Lower leg skin (tissue), 4 donors: ENCODE measurements at regions of chr3 and their contacts with region 1.

Region 1: DNA sequence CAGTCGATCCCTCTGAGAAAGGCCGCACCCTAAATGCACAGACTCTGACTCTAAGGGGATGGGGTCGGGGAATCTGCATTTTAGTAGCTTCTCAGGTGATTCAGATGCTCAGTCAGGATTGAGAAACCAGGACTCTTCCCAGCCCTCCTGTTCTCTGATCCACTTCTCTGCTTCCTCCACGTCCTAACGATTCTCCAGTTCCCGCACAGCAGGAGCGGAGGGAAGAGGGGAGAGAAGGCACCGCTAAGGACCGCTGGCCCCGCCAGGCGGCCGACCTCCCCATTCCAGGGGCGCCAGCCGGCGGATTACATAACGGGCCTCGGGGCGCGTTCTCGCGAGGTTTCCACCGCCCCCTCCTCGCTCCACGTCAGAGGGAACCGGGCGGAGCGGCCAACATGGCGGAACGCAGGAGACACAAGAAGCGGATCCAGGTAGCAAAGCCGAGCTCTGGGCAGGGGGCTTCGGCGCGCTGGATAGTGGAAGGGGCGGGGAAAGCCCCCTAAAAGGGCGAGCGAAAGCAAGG is at the start of gene SEC62:
- DNase-seq: peak; percentile 87 to 98
- H3K4me3 ChIP-seq: peak within 1 kb of the TSS; percentile 77
- CTCF ChIP-seq: no peak
- POLR2A ChIP-seq: peak in 1 of 2 donors; percentile 50
- total RNA-seq, gene SEC62: 16.5 to 28.8 (median 22.8) TPM

Region 2: GRCh38 chr3:169774186-169774585 is 192.3 kb before region 1 on chr3:
- intact Hi-C with region 1: loop called (anchors 2 kb)
- DNase-seq: no peak
- H3K4me3 ChIP-seq: no peak overlapping the region
- CTCF ChIP-seq: no peak
- POLR2A ChIP-seq: no peak